Activated CD8-positive, alpha-beta T cell treated with anti-CD3 and anti-CD28 coated beads, Interleukin-2, amount 10 ng/mL, durations not matched to agents 7 days and 5 days (primary cell): ENCODE measurements at regions of chr6 and their contacts with region 1.

Region 1: DNA sequence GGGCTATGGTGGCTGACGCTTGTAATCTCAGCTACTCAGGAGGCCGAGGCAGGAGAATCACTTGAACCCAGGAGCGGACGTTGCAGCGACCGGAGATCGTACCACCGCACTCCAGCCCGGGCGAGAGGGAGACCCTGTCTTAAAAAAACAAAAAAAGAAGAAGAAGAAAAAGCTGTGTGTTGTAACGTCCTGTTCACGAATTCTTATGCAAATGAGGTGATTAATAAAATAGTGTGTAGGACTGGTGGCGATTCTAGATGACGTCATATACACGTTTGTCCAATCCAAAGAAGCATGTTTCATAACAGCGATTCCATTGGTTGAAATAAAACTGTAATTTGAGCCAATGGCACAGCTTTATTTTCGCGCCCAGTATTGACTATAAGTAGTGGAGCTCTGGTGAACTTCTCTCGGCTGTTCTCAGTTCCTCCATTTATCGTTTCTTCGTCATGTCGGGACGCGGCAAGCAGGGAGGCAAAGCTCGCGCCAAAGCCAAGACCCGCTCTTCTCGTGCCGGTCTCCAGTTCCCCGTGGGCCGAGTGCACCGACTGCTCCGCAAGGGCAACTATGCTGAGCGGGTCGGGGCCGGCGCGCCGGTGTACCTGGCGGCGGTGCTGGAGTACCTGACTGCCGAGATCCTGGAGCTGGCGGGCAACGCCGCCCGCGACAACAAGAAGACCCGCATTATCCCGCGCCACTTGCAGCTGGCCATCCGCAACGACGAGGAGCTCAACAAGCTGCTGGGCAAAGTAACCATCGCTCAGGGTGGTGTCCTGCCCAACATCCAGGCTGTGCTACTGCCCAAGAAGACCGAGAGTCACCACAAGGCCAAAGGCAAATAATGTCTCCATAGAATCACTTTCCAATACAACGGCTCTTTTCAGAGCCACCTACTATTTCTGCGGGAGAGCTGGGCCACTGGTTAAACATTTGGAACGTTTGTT is 47.0 kb downstream of the OR2B2 start:
- DNase-seq: peak; percentile 90
- ATAC-seq: peak; percentile 57
- H3K4me3 Mint-ChIP-seq: peak overlapping the region; percentile 87
- H3K27ac Mint-ChIP-seq: peak overlapping the region; percentile 99
- H3K4me1 Mint-ChIP-seq: peaks cover 55% of the 10 kb centered on the region
- H3K27me3 Mint-ChIP-seq: no peaks in the 10 kb centered on the region

Region 2: DNA sequence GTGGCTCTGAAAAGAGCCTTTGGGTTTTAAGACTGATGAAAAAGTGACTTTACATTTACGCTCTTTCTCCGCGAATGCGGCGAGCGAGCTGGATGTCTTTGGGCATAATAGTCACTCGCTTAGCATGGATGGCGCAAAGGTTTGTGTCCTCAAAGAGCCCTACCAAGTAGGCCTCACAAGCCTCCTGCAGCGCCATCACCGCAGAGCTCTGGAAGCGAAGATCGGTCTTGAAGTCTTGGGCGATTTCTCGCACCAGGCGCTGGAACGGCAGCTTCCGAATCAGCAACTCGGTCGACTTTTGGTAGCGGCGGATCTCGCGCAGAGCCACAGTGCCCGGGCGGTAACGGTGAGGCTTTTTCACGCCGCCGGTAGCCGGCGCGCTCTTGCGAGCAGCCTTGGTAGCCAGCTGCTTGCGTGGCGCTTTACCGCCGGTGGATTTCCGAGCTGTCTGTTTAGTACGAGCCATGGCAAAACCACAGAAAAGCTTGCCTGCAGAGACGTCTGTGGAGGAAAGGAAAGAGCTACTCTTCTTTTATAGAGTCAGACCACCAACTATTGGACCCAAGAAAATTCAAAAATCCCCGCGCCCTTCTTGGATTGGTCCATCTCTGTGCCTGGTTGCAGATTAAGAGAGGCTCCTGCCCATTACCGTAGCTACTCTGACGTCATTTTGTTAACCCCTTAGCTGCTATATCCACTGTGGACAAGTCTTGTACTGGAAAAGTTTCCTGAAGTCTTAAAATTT is 1833.4 kb before region 1 on chr6:
- CTCF ChIA-PET with region 1: no interaction called
- POLR2A ChIA-PET with region 1: interaction called, 362 read pairs
- DNase-seq: peak; percentile 97
- ATAC-seq: peak; percentile 66
- H3K4me3 Mint-ChIP-seq: peak overlapping the region; percentile 93
- H3K27ac Mint-ChIP-seq: peak overlapping the region; percentile 99
- H3K4me1 Mint-ChIP-seq: peaks cover 68% of the 10 kb centered on the region
- H3K27me3 Mint-ChIP-seq: peaks cover 3% of the 10 kb centered on the region

Region 3: DNA sequence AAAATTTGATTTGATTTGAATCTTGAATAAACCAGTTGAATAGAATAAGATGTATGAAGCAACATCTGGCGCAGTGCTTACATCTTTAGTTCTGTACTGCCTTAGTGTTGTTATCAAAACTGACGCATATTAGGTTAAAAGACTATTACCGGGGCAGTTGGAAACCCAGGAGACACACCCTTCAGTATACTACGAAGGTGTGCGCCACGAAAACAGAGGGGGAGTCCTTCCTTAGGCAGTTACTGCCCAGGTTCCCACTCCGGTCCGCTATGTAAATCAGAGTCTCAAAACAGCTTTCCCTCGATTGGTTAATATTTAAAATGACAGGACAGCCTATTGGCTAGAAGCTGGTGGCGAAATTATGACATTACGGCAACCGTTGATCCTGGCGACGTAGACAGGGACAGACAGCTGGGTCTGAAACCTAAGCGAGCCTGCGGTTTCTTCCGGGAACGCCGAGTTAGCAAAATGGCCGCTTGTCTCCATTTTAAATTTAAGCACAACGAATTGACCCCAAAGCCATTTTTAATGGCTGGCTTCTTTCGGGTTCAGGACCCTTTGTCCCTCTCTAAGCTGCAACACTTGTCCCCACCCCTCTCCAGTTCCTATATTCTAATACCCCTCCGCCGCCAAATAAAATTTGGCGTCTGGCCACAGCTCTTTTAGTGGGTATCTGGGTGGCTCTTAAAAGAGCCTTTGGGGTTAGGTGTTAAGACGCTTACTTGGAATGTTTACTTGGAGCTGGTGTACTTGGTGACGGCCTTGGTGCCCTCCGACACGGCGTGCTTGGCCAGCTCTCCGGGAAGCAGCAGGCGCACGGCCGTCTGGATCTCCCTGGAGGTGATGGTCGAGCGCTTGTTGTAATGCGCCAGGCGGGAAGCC is 1742.1 kb before region 1 on chr6:
- CTCF ChIA-PET with region 1: no interaction called
- POLR2A ChIA-PET with region 1: interaction called, 66 read pairs
- DNase-seq: peak; percentile 98
- ATAC-seq: peak; percentile 50
- H3K4me3 Mint-ChIP-seq: peak overlapping the region; percentile 95
- H3K27ac Mint-ChIP-seq: peak overlapping the region; percentile 100
- H3K4me1 Mint-ChIP-seq: peaks cover 44% of the 10 kb centered on the region
- H3K27me3 Mint-ChIP-seq: peaks cover 1% of the 10 kb centered on the region

Region 4: GRCh38 chr6:26216356-26216885 is 1648.8 kb before region 1 on chr6:
- CTCF ChIA-PET with region 1: no interaction called
- POLR2A ChIA-PET with region 1: interaction called, 88 read pairs
- DNase-seq: peak; percentile 93
- ATAC-seq: peak; percentile 67
- H3K4me3 Mint-ChIP-seq: no peak overlapping the region
- H3K27ac Mint-ChIP-seq: no peak overlapping the region
- H3K4me1 Mint-ChIP-seq: peaks cover 43% of the 10 kb centered on the region
- H3K27me3 Mint-ChIP-seq: no peaks in the 10 kb centered on the region

Region 5: GRCh38 chr6:27146706-27147505 is 718.3 kb before region 1 on chr6:
- CTCF ChIA-PET with region 1: no interaction called
- POLR2A ChIA-PET with region 1: interaction called, 242 read pairs
- DNase-seq: peak; percentile 91
- ATAC-seq: peak; percentile 64
- H3K4me3 Mint-ChIP-seq: no peak overlapping the region
- H3K27ac Mint-ChIP-seq: no peak overlapping the region
- H3K4me1 Mint-ChIP-seq: peaks cover 35% of the 10 kb centered on the region
- H3K27me3 Mint-ChIP-seq: no peaks in the 10 kb centered on the region

Region 6: DNA sequence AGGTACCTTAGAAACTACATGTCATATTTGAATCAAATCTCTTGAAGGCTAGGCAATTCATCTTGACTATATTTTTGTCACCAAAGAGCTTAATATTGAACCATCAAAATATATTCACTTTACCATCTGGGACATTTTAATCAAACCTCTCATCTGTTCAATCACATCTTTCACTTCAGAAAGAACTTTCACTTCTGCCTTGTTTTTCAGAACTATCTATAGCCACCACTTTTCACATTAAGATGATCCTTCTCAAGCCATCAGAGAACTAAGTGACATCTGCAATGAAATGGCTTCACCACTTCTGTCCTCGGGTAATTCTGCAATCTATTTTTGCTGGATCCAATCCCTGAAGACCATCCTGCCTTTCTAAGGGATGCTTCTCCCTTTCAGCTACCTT is 10.8 kb before region 1 on chr6:
- CTCF ChIA-PET with region 1: interaction called, 6 read pairs
- POLR2A ChIA-PET with region 1: interaction called, 135 read pairs
- DNase-seq: no peak
- ATAC-seq: no peak
- H3K4me3 Mint-ChIP-seq: no peak overlapping the region
- H3K27ac Mint-ChIP-seq: no peak overlapping the region
- H3K4me1 Mint-ChIP-seq: no peaks in the 10 kb centered on the region
- H3K27me3 Mint-ChIP-seq: peaks cover 7% of the 10 kb centered on the region